ENCODE measurements at regions of chr2 and their contacts with region 1.

Region 1: DNA sequence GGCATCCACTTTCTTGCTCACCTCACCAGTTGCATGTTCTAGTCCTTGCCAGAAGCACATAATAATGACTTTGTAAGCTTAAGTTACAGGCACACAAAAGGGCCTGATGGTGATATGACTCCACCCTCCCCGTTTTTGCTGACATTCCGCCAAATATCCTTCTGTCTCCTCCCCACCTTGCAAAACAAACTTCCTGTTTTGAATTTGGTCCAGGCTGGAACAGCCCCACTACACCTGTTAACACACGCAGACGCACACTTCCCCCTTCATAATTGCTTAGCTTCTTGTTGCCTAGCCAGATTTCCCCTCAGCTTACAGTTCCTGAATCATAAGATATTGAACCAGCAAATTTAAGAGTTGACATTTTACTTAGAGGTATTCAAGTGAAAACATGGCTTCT is at the start of gene MGAT5:
- DNase-seq: no peak
- H3K4me3 Mint-ChIP-seq: no peak within 1 kb of the TSS
- H3K27ac Mint-ChIP-seq: no peak within 1 kb of the TSS
- H3K4me1 Mint-ChIP-seq: peaks cover 84% of the 10 kb centered on the region
- H3K27me3 Mint-ChIP-seq: no peaks in the 10 kb centered on the region
- total RNA-seq, gene MGAT5: 33.6 to 38.3 TPM

Region 2: DNA sequence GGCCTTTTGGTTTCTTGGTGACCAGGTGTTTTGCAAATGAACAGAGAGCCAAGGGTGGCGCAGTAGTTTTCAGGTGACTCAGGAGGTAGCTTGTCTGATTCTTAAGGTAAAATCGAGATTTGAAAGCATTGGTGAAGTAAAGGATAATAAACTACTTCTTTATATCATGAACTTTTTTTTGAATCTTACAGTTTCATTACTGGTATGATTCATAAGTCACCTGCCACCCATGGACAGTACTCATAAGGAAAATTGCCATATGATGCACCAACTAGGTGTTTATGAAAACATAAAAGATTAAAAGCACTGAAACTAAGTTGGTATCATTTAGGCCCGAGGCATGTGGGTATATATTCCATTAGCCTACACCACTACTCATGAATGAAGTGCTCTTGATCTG is 84.0 kb before region 1 on chr2:
- CTCF ChIA-PET with region 1: no interaction called
- POLR2A ChIA-PET with region 1: no interaction called
- intact Hi-C with region 1: loop called (anchors 1 kb)
- DNase-seq: peak; percentile 59
- H3K4me3 Mint-ChIP-seq: no peak overlapping the region
- H3K27ac Mint-ChIP-seq: peak overlapping the region; percentile 68
- H3K4me1 Mint-ChIP-seq: peaks cover 84% of the 10 kb centered on the region
- H3K27me3 Mint-ChIP-seq: no peaks in the 10 kb centered on the region

Region 3: GRCh38 chr2:134218930-134219658 is 34.7 kb before region 1 on chr2:
- CTCF ChIA-PET with region 1: no interaction called
- POLR2A ChIA-PET with region 1: interaction called, 10 read pairs
- intact Hi-C with region 1: loop called (anchors 1 kb)
- DNase-seq: peak; percentile 56
- H3K4me3 Mint-ChIP-seq: peak overlapping the region; percentile 49
- H3K27ac Mint-ChIP-seq: peak overlapping the region; percentile 74
- H3K4me1 Mint-ChIP-seq: peaks cover 67% of the 10 kb centered on the region
- H3K27me3 Mint-ChIP-seq: no peaks in the 10 kb centered on the region

Region 4: DNA sequence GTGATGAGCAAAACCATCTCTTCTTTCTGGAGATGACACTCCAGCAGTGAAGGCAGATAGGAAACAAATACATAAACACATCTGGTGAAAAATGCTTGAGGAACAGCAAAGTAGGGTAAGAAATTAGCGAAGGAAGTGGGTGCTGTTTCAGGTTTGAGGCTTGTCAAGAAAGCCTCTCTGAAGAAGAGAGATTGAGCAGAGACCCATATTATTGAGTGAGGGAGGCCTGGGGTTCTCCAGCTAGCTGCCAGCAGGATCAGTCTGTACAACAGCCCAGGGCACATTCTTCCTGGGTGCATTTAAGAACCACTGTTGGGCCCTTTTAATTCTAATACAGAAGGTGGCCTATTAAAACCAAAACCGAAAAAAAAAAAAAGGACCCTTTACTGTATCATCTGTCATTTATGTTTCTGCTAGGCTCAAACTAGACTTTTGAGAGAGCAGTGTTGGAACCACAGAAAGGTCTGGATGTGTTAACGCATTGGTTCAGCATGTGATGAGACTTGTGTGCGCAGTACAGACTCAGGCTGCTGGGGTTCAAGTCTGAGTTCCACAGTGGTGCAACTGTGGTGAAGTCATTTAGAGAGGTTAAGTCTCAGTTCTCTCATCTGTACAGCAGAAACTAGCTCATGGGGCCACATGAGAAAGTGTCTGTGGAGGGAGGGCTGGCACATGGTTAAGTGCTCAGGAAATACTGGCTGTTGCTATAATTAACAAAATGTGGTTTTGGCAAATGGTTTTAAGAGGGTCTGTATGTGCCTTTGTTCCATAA is 29.0 kb after region 1 on chr2:
- CTCF ChIA-PET with region 1: interaction called, 5 read pairs
- POLR2A ChIA-PET with region 1: interaction called, 4 read pairs
- intact Hi-C with region 1: loop called (anchors 1 kb)
- DNase-seq: peak; percentile 73
- H3K4me3 Mint-ChIP-seq: no peak overlapping the region
- H3K27ac Mint-ChIP-seq: peak overlapping the region; percentile 21
- H3K4me1 Mint-ChIP-seq: peaks cover 42% of the 10 kb centered on the region
- H3K27me3 Mint-ChIP-seq: no peaks in the 10 kb centered on the region

Region 5: DNA sequence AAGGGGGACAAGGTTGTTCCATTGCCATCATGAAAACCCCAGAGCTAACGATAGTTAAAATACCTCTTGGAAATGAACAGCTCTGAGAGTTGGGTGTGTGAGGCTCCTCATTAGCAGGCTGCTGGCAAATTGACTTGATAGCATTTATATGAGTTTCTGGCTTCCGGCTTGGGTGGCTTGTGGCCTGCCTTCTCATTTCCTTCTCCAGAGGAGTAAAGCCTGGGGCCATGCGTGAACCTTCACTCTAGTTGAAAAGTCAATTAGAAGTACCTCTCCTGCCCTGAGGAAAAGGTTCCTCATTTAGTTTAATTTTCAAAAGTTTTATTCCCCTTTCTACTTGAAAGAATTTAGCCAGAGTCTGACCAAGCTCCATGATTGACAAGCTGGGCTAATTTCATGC is 67.1 kb after region 1 on chr2:
- CTCF ChIA-PET with region 1: no interaction called
- POLR2A ChIA-PET with region 1: no interaction called
- intact Hi-C with region 1: loop called (anchors 2 kb)
- DNase-seq: peak; percentile 64
- H3K4me3 Mint-ChIP-seq: no peak overlapping the region
- H3K27ac Mint-ChIP-seq: no peak overlapping the region
- H3K4me1 Mint-ChIP-seq: peaks cover 45% of the 10 kb centered on the region
- H3K27me3 Mint-ChIP-seq: no peaks in the 10 kb centered on the region

Region 6: GRCh38 chr2:134411828-134412638 is 158.2 kb after region 1 on chr2:
- CTCF ChIA-PET with region 1: interaction called, 12 read pairs
- POLR2A ChIA-PET with region 1: no interaction called
- intact Hi-C with region 1: no loop called
- DNase-seq: peak; percentile 78
- H3K4me3 Mint-ChIP-seq: no peak overlapping the region
- H3K27ac Mint-ChIP-seq: no peak overlapping the region
- H3K4me1 Mint-ChIP-seq: peaks cover 35% of the 10 kb centered on the region
- H3K27me3 Mint-ChIP-seq: no peaks in the 10 kb centered on the region

Measured in activated CD4-positive, alpha-beta memory T cell treated with anti-CD3 and anti-CD28 coated beads for 36 hours (primary cell).